ENCODE measurements at regions of chr5 and their contacts with region 1.

Region 1: GRCh38 chr5:151115274-151115905 is 34.6 kb upstream of the TNIP1 start:
- DNase-seq: peak; percentile 88
- ATAC-seq: peak; percentile 86
- H3K4me3 Mint-ChIP-seq: no peak overlapping the region
- H3K27ac Mint-ChIP-seq: no peak overlapping the region
- H3K4me1 Mint-ChIP-seq: no peaks in the 10 kb centered on the region
- H3K27me3 Mint-ChIP-seq: no peaks in the 10 kb centered on the region; the same call in 1 of the 2 replicates
- CTCF ChIP-seq: peak; percentile 87

Region 2: GRCh38 chr5:151002250-151002649 is 113.1 kb before region 1 on chr5:
- CTCF ChIA-PET with region 1: interaction called, 41 read pairs
- POLR2A ChIA-PET with region 1: no interaction called
- DNase-seq: no peak
- ATAC-seq: peak; percentile 75
- H3K4me3 Mint-ChIP-seq: no peak overlapping the region
- H3K27ac Mint-ChIP-seq: no peak overlapping the region
- H3K4me1 Mint-ChIP-seq: peaks cover 12% of the 10 kb centered on the region
- H3K27me3 Mint-ChIP-seq: no peaks in the 10 kb centered on the region
- CTCF ChIP-seq: no peak

Region 3: GRCh38 chr5:151063142-151063949 is 52.0 kb before region 1 on chr5:
- CTCF ChIA-PET with region 1: interaction called, 15 read pairs
- POLR2A ChIA-PET with region 1: no interaction called
- DNase-seq: no peak
- ATAC-seq: no peak
- H3K4me3 Mint-ChIP-seq: no peak overlapping the region
- H3K27ac Mint-ChIP-seq: no peak overlapping the region
- H3K4me1 Mint-ChIP-seq: peaks cover 17% of the 10 kb centered on the region
- H3K27me3 Mint-ChIP-seq: no peaks in the 10 kb centered on the region
- CTCF ChIP-seq: no peak

Region 4: GRCh38 chr5:151093476-151093889 is 21.9 kb before region 1 on chr5:
- CTCF ChIA-PET with region 1: interaction called, 14 read pairs
- POLR2A ChIA-PET with region 1: no interaction called
- DNase-seq: no peak
- ATAC-seq: no peak; the same call in 1 of the 2 replicates
- H3K4me3 Mint-ChIP-seq: no peak overlapping the region
- H3K27ac Mint-ChIP-seq: no peak overlapping the region
- H3K4me1 Mint-ChIP-seq: peaks cover 29% of the 10 kb centered on the region
- H3K27me3 Mint-ChIP-seq: no peaks in the 10 kb centered on the region
- CTCF ChIP-seq: no peak

Region 5: GRCh38 chr5:151141535-151141934 is 26.1 kb after region 1 on chr5:
- CTCF ChIA-PET with region 1: interaction called, 19 read pairs
- POLR2A ChIA-PET with region 1: interaction called, 3 read pairs
- DNase-seq: peak; percentile 60
- ATAC-seq: peak; percentile 85
- H3K4me3 Mint-ChIP-seq: no peak overlapping the region; the same call in 1 of the 2 replicates
- H3K27ac Mint-ChIP-seq: peak overlapping the region; percentile 93
- H3K4me1 Mint-ChIP-seq: peaks cover 18% of the 10 kb centered on the region
- H3K27me3 Mint-ChIP-seq: no peaks in the 10 kb centered on the region
- CTCF ChIP-seq: no peak